GM10248 (cell line): ENCODE measurements at regions of chr4 and their contacts with region 1.

Region 1: GRCh38 chr4:53929955-53930798 is 134.2 kb downstream of the CHIC2 start:
- DNase-seq: peak; percentile 55
- CTCF ChIP-seq: peak; percentile 65

Region 2: DNA sequence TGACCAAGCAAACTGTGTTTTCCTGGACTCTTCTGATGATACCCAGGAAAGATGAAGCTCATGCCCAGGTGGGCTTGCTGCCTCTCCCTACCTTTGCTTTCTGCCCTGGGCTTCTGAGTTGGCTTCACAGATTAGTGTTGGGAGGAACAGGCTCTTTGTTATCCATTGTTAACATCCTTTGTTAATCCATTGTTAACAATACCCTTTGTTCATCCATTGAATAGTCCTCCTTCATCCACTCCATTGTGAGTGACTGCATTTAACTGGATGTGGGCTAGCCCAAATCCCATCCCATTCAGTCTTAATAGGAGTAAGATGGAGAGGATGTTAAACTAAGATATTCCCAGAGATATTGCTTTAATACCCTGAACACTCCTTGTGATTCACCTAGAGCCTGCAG is 139.9 kb before region 1 on chr4:
- CTCF ChIA-PET with region 1: no interaction called
- POLR2A ChIA-PET with region 1: no interaction called
- DNase-seq: no peak
- CTCF ChIP-seq: no peak

Region 3: DNA sequence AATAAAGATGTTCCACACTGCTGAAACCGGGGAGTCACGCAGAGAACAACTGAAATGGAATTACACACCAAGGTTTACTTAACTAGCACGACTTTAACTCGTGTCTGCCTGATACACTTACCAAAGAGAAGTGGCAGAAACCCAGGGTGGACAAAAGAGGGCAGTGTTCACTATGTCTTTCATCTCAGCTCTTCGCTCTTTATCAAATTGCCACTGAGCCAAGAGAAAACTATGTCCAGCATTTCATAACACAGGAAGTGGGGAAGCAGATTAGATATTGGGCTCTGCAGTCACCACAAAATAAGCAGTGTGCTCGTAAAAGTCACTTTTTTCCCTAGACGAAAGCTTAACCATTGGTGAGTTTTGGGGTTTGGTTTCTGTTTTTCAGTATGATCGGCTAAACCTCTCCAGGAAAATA is 21.5 kb before region 1 on chr4:
- CTCF ChIA-PET with region 1: interaction called, 20 read pairs
- POLR2A ChIA-PET with region 1: no interaction called
- DNase-seq: peak; percentile 35
- CTCF ChIP-seq: peak; percentile 62

Region 4: GRCh38 chr4:53920116-53920515 is 10.1 kb before region 1 on chr4:
- CTCF ChIA-PET with region 1: interaction called, 28 read pairs
- POLR2A ChIA-PET with region 1: no interaction called
- DNase-seq: no peak
- CTCF ChIP-seq: no peak

Region 5: DNA sequence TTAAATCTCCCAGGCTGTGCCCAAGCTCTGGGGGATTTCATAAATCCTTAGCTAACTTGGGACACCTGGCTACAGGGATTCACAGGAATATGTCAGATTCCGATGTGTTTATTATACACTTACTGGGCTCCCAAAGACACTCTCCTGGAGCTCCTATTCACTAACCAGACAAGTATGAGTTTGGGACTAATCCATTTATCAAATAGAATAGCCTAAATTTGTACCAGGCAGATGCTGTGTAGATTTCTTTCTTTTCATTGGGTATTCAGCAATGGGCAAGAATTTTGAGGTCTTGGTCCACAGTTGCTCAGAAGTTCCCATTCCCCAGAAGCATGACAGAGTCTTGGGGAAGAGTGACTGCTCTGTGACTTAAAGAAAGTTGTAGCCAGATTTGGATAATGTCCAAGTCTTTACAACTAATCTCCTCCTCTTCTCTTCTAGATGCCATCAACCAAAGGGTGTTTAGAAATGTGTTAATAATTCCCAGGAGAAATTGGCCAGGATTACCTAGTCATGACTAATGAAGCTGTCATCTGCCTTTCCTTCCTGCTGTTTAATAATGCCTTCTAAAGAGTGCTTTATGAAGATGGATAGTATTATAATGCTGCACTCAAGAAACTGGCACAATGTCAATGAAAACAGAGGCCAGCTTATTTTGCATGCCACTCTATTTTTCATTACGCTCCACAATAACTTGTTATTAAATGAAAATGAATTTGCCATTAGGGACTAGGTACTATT is 13.3 kb after region 1 on chr4:
- CTCF ChIA-PET with region 1: interaction called, 32 read pairs
- POLR2A ChIA-PET with region 1: no interaction called
- DNase-seq: no peak
- CTCF ChIP-seq: no peak

Region 6: DNA sequence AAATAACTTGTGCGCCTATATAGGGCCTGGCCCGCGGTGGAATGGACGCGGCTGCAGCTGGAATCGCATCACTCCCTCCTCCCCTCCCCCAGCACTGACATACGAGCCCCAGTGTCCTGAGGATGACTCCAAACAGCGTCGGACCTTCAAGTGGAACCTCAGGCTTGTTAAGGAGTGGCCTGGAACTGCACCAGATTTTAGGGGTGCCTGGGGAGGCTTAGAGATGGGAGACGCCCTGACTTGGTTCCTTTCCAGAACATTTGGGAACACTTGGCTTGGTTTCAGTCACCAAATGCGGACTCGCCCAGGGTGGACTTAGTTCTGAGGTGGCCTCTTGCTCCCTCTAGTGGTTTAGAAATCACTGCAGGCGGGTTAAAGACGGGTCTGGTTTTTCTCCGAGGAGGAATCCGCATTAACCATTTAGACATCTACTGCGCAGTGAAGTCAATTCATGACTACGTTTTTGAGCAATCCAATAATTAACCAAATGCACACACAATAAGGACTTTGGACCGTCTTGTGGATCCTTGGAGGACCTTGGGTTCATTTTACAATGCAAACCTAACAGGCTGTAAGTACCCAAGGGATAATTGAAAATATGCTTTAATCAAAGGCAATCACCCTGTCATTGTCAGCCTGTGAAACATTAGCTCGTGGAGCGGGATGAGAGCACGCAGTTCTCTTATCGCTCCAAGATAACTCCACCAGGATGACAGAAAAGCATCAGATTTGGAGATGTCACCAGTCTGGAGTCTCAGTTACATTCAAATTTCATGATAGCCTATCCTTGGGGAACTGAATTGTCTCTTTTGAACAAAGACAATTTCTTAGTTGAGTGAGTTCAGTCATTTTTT is 287.7 kb after region 1 on chr4:
- CTCF ChIA-PET with region 1: interaction called, 52 read pairs
- POLR2A ChIA-PET with region 1: no interaction called
- DNase-seq: peak; percentile 76
- CTCF ChIP-seq: peak; percentile 66